Activated CD8-positive, alpha-beta memory T cell treated with anti-CD3 and anti-CD28 coated beads, Interleukin-2, amount 10 ng/mL, durations not matched to agents 7 days and 5 days (primary cell): ENCODE measurements at regions of chr20 and their contacts with region 1.

Region 1: GRCh38 chr20:33460711-33461110 is 17.1 kb upstream of the SNTA1 start:
- DNase-seq: no peak
- ATAC-seq: no peak
- H3K4me3 Mint-ChIP-seq: no peak overlapping the region
- H3K27ac Mint-ChIP-seq: no peak overlapping the region
- H3K4me1 Mint-ChIP-seq: peaks cover 1% of the 10 kb centered on the region
- H3K27me3 Mint-ChIP-seq: no peaks in the 10 kb centered on the region

Region 2: DNA sequence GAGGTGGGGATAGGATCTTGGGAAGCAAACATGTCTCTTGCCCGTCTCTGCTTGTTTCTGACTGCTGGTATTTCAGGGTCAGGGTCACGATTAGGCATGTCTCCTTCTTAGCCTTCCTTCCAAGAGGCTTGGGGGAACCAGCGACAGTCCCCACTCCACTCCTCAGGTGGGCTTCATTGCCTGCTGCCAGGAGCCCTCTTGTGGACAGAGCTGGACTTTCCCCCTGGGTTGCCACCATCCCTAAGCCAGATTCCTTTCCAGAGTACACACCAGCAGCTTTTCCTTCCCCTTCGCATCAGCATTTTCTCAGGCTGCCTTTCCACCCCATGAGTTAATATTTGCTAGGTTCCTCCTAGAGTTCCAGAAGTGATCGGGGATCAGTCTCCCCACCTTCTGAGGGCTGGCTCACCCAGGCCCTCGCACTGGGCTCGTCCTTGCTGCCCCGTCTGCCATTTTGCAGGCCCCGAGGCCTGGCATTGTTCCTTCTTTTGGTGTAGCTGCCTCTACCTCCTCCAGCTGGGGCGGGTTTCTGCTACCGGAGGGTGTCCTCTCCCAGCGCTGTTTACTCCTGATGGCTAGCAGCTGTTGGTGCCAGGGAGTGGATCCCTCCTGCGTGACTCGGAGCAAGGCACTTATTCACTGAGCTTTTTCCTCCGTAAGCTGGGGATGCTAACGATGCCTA is 192.6 kb after region 1 on chr20:
- CTCF ChIA-PET with region 1: interaction called, 10 read pairs
- DNase-seq: peak; percentile 70
- ATAC-seq: peak; percentile 68
- H3K4me3 Mint-ChIP-seq: no peak overlapping the region
- H3K27ac Mint-ChIP-seq: no peak overlapping the region
- H3K4me1 Mint-ChIP-seq: peaks cover 34% of the 10 kb centered on the region
- H3K27me3 Mint-ChIP-seq: no peaks in the 10 kb centered on the region